Endothelial cell of umbilical vein (primary cell): ENCODE measurements at regions of chr2 and their contacts with region 1.

Region 1: DNA sequence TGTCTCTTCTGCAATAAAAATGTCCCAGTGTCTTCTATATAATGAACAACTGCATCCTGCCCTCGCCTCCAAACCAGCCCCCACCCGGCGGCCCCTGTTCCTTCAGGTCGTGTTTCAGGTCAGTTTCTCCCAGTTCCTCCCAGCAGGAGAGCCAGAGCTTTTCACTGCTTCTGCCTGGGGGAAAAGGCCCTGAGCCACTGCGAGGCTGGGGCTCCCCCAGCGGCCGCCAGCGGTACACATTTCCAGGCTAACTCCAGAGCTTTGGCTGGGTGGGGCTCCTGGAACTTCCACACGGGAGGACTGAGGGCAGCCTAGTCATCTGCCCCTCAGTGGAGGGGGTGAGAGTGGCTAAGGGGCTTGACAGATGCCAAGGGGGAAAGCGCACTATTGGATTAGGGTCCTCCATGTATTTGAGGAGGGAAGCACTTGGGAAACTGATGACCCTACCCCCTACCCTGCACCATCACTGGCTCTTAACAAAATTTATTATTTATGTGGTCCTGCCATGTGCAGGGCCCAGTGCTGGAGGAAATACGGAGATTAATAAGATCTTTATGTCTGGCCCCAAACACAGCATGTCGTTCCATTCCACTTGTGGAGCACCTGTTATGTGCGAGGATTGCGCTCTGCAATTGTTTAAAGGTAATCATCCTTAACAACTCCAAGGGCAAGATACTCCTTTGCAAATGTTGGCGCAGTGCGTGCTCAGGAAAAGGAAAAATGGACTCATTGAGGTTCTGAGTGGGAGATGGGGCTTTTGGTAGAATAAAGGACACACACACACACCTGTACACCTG is 17.3 kb upstream of the CYS1 start:
- DNase-seq: peak; percentile 54
- H3K4me3 ChIP-seq: no peak overlapping the region
- H3K27ac ChIP-seq: no peak overlapping the region
- H3K4me1 ChIP-seq: no peaks in the 10 kb centered on the region
- H3K27me3 ChIP-seq: peaks cover 0 to 1% of the 10 kb centered on the region in 2 experiments
- CTCF ChIP-seq: peak; percentile 87 to 95
- POLR2A ChIP-seq: no peak

Region 2: DNA sequence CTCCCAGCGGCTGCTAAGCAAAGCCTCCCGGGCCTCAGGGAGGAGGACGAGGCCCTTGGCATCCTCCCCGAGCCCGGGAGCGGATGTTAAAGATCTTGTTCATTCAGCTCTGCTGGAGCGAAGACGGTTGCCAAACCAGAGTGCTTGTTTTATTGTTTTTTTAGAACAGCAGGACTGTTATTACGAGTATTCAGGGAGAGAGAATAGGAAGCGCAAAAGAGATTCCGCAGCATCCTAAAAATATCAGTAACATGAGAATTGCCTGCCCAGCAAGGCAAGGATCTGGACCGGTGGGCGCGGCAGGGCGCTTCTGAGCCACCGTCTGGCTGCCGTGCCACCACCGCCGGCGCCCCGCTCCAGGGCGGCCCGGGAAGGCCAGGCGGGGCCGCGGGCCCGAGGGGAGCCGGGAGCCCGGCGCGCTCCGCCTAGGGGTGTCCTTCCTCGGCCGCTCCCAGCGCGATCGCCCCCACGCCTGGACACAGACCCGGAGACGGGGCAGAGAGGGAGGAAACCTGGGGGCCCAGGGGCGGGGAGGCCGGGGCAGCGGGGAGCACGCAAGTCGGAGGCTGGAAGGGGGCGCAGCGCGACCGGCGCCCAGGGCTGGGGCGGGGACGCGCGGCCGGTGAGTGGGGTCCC is 18.2 kb before region 1 on chr2:
- CTCF ChIA-PET with region 1: interaction called, 485 read pairs
- POLR2A ChIA-PET with region 1: no interaction called
- dilution Hi-C with region 1: no loop called
- intact Hi-C with region 1: loop called (anchors 1 kb)
- DNase-seq: no peak
- H3K4me3 ChIP-seq: peak overlapping the region in 1 of 3 experiments; percentile 36
- H3K27ac ChIP-seq: no peak overlapping the region
- H3K4me1 ChIP-seq: no peaks in the 10 kb centered on the region
- H3K27me3 ChIP-seq: peaks cover 47 to 59% of the 10 kb centered on the region in 2 experiments
- CTCF ChIP-seq: no peak
- POLR2A ChIP-seq: no peak

Region 3: GRCh38 chr2:10109311-10109710 is 11.8 kb after region 1 on chr2:
- CTCF ChIA-PET with region 1: interaction called, 22 read pairs
- POLR2A ChIA-PET with region 1: no interaction called
- dilution Hi-C with region 1: no loop called
- intact Hi-C with region 1: no loop called
- DNase-seq: no peak
- H3K4me3 ChIP-seq: no peak overlapping the region
- H3K27ac ChIP-seq: no peak overlapping the region
- H3K4me1 ChIP-seq: no peaks in the 10 kb centered on the region
- H3K27me3 ChIP-seq: no peaks in the 10 kb centered on the region
- CTCF ChIP-seq: no peak
- POLR2A ChIP-seq: no peak

Region 4: GRCh38 chr2:10188216-10188615 is 90.7 kb after region 1 on chr2:
- CTCF ChIA-PET with region 1: no interaction called
- POLR2A ChIA-PET with region 1: no interaction called
- dilution Hi-C with region 1: no loop called
- intact Hi-C with region 1: no loop called
- DNase-seq: peak; percentile 33
- H3K4me3 ChIP-seq: no peak overlapping the region
- H3K27ac ChIP-seq: no peak overlapping the region
- H3K4me1 ChIP-seq: no peaks in the 10 kb centered on the region
- H3K27me3 ChIP-seq: no peaks in the 10 kb centered on the region
- CTCF ChIP-seq: peak; percentile 52 to 66
- POLR2A ChIP-seq: no peak